WTC11 (cell line): ENCODE measurements at regions of chr14 and their contacts with region 1.

Region 1: DNA sequence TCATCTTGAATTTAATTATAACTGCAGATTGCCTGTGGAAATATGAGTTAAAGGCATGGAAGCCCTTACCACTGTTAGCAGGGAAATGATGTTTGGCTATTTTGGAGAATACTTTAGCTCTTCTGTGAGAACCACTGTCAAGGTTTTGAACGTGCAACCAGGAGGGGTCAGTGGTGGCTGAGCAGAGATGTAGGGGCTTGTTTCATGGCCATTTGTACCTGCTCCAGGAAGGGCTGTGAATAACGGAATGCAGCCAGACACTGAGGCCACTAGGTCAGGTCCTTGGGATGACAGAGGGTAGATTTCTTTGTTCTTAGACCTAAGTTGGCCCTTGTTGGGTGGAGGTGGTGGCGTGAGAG is 8.3 kb downstream of the TRAF3 start:
- DNase-seq: no peak
- ATAC-seq: peak; percentile 59
- H3K4me3 Mint-ChIP-seq: no peak overlapping the region
- H3K27ac Mint-ChIP-seq: no peak overlapping the region
- H3K4me1 Mint-ChIP-seq: peaks cover 20% of the 10 kb centered on the region
- H3K27me3 Mint-ChIP-seq: no peaks in the 10 kb centered on the region
- CTCF ChIP-seq: no peak

Region 2: GRCh38 chr14:102759456-102760187 is 25.9 kb before region 1 on chr14:
- CTCF ChIA-PET with region 1: interaction called, 10 read pairs
- POLR2A ChIA-PET with region 1: no interaction called
- DNase-seq: no peak
- ATAC-seq: peak; percentile 52
- H3K4me3 Mint-ChIP-seq: no peak overlapping the region; the same call in 1 of the 2 replicates
- H3K27ac Mint-ChIP-seq: peak overlapping the region; percentile 60; the same call in 1 of the 2 replicates
- H3K4me1 Mint-ChIP-seq: peaks cover 32% of the 10 kb centered on the region
- H3K27me3 Mint-ChIP-seq: no peaks in the 10 kb centered on the region; the same call in 1 of the 2 replicates
- CTCF ChIP-seq: no peak

Region 3: DNA sequence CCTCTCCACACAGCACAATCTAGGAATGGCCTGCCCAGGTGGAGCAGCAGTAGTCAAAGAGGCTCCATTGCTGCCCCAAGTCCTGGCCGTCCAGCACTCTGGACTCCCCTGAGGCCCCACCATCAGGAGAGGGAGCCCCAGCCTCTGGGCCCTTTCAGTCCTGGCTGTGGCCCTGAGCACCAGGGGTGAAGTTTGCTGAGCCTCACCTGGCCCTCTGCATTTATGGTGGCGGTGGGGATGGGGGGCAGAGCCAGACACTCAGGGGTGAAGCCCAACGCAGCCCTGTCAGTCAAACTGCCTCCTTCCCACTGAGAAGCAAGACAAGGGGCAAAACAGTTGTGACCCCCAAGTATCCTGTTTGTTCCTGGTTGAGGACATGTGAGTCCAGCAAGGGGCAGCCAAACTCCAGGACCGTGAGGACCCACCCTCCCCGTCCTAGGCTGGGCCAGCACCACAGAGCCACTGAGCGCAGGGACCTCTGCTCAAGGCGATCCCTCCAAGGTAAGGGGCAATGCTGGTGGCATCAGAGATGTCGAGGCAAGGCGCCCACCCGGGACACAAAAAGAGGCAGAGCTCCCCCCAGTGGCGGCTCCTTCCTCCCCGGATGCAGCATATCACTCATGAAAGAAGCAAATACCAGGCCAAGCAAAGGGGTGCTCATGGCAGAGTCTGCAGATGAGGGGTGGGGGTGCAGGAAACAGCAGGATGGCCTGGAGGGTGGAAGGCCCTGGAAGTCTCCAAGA is 132.1 kb after region 1 on chr14:
- CTCF ChIA-PET with region 1: interaction called, 14 read pairs
- POLR2A ChIA-PET with region 1: no interaction called
- DNase-seq: peak; percentile 84
- ATAC-seq: peak; percentile 77
- H3K4me3 Mint-ChIP-seq: no peak overlapping the region
- H3K27ac Mint-ChIP-seq: no peak overlapping the region
- H3K4me1 Mint-ChIP-seq: no peaks in the 10 kb centered on the region
- H3K27me3 Mint-ChIP-seq: no peaks in the 10 kb centered on the region
- CTCF ChIP-seq: peak; percentile 63